Mammary epithelial cell (primary cell): ENCODE measurements at regions of chr22 and their contacts with region 1.

Region 1: DNA sequence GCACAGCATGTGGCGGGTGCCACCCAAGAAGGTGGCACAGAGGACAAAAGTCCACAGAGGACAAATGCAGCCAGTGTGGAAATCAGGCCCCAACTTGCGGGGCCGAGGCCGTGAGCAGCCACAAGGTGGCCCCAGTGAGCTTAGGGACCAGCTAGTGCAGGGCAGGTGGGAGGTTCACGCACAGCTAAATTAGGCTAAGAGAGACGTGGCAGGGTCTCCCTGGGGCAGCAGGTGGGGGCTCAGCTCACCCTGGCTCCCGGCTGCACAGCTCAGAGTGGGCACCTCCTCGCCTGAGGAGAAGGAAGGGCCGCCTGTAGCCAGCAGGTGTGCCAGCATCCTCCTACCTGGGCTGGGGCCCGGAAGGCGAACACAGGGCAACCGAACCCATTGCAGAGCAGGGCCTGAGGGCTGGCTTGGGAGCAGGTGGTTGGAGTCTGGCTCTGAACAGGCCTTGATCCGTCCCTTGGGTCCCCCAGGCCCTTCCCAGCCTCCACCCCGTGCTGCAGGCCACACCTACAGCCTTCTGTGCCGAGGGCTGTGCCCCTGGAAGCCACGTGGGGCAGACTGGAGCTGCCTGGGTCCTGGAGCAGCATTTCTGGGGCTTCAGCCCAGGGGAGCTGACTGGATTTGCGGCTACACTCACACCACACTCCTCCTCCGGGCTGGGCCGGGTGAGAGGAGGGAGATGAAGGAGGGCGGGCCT is 26.1 kb upstream of the CELSR1 start:
- DNase-seq: peak; percentile 42
- H3K4me3 ChIP-seq: peak overlapping the region in 1 of 3 experiments; percentile 12
- H3K27ac ChIP-seq: no peak overlapping the region
- H3K4me1 ChIP-seq: peaks cover 14% of the 10 kb centered on the region
- H3K27me3 ChIP-seq: no peaks in the 10 kb centered on the region
- CTCF ChIP-seq: peak; percentile 90

Region 2: GRCh38 chr22:46619830-46620501 is 56.4 kb after region 1 on chr22 and contains the start of gene GRAMD4:
- CTCF ChIA-PET with region 1: no interaction called
- dilution Hi-C with region 1: loop called (anchors 5 kb)
- in situ Hi-C with region 1: no loop called
- intact Hi-C with region 1: no loop called
- DNase-seq: no peak
- H3K4me3 ChIP-seq: no peak within 1 kb of the TSS
- H3K27ac ChIP-seq: no peak within 1 kb of the TSS
- H3K4me1 ChIP-seq: peaks cover 15% of the 10 kb centered on the region
- H3K27me3 ChIP-seq: no peaks in the 10 kb centered on the region
- CTCF ChIP-seq: no peak
- total RNA-seq, gene GRAMD4: 19.2 to 58.8 TPM

Region 3: DNA sequence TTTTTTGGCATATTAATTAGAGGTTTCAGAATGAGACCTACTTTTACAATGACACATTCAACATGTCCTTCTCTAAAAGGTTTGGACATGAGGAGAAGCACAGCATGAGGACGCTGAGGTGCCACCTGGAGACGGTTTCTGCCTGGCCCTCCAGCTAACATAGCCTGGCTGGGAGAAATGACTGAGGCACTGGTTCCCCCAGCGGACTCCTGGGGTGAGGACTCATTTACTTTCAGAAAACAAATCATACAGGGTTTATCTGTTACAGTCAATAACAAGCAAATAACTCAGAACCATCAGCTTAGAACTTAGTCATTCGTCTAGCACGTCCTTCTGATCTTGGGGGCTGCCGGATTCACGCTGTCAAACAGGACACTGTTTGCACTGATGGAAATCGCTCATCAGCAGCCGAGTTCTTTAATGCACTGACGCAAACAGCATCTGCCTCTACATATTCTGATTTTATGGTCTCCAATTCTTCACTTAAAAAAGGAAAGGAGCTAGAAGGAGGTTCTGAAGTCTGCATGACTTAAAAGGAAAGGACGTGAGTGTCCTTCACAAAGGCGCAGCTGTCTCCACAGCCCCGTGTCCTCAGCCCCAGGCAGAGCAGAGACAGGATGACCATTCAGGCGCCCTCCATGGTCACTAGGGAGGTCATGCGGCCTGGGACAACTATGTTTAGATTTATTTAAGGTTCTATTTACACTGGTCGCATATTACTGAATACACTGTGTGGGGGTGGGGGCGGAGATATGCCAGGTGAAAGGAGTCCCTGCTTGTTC is 130.3 kb after region 1 on chr22:
- CTCF ChIA-PET with region 1: interaction called, 10 read pairs
- dilution Hi-C with region 1: no loop called
- in situ Hi-C with region 1: no loop called
- intact Hi-C with region 1: no loop called
- DNase-seq: no peak
- H3K4me3 ChIP-seq: no peak overlapping the region
- H3K27ac ChIP-seq: no peak overlapping the region
- H3K4me1 ChIP-seq: no peaks in the 10 kb centered on the region
- H3K27me3 ChIP-seq: no peaks in the 10 kb centered on the region
- CTCF ChIP-seq: no peak

Region 4: DNA sequence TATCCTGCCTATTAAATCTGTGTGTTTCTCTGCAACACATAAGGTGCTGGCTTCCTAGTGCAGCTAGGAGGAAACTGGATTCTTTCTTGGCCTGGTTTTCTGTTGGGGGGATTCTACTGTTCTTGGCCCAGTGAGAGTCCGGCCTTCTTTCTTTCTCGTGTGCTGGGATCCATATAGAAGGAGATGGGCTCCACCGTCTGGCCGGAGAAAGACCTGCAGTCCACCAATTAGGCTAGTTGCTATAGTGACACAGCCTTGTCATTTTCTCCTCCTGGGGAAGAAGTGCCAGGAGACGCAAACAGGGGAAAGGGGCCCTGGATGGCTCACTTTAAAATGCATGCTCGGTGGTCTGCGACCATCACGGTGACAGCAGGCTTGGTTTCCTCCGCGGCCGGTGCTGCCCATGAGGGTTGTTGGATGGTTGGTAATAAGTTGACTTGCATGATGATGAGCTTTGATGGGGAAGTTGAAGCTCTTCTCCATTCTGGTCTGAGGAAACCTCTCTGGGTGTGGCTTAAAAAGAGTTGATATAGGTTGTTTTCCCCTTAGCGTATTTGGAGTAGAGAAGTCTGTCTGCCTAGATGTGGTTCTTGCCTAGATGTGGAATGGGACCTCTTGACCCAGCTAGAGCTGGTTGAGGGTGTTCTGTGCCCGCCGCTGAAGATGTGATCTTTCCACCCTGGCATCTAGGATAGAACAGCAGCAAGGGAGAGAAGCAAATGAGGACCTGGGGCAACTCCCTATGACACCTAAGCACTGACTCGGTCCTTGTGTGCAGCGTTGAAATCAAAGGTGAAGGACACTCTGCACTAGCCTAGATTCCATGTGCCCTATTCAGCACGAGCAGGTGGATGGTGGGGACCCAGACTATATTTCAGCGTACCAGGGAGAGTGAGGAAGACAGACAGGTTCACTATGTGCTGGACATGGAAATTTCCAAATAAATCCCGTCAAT is 1929.1 kb after region 1 on chr22:
- CTCF ChIA-PET with region 1: no interaction called
- dilution Hi-C with region 1: no loop called
- in situ Hi-C with region 1: loop called in 1 of 2 experiments (anchors 25 kb)
- intact Hi-C with region 1: no loop called
- DNase-seq: peak; percentile 31
- H3K4me3 ChIP-seq: no peak overlapping the region
- H3K27ac ChIP-seq: no peak overlapping the region
- H3K4me1 ChIP-seq: no peaks in the 10 kb centered on the region
- H3K27me3 ChIP-seq: peaks cover 15% of the 10 kb centered on the region
- CTCF ChIP-seq: peak; percentile 69 to 75